Activated CD4-positive, alpha-beta memory T cell treated with anti-CD3 and anti-CD28 coated beads, Interleukin-2, amount 10 ng/mL, durations not matched to agents 7 days and 5 days (primary cell): ENCODE measurements at regions of chr14 and their contacts with region 1.

Region 1: DNA sequence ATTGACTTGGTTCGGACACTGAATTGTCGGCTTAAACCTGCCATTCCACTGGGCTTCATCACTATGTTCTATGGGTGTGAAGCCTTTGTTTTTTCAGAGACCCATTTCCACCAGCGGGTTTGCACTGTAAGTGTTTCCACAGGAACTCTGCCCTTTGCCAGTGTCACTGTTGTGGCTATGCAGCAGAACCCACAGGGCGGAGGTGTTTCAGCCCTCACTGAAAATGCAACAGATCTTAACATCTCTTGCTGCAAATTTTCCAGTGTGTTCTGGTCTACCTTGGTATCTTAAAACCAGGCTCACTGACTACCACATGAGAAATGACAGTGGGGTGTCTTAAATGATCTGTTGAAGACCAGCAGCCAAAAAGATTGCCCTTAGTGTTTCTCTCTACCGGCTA is 21.1 kb downstream of the PRKCH start:
- DNase-seq: peak; percentile 91
- H3K4me3 Mint-ChIP-seq: peak overlapping the region; percentile 62
- H3K27ac Mint-ChIP-seq: peak overlapping the region; percentile 95
- H3K4me1 Mint-ChIP-seq: peaks cover 94% of the 10 kb centered on the region
- H3K27me3 Mint-ChIP-seq: no peaks in the 10 kb centered on the region

Region 2: GRCh38 chr14:61125867-61126572 is 216.5 kb before region 1 on chr14:
- CTCF ChIA-PET with region 1: no interaction called
- POLR2A ChIA-PET with region 1: no interaction called
- DNase-seq: no peak
- H3K4me3 Mint-ChIP-seq: no peak overlapping the region
- H3K27ac Mint-ChIP-seq: no peak overlapping the region
- H3K4me1 Mint-ChIP-seq: peaks cover 26% of the 10 kb centered on the region
- H3K27me3 Mint-ChIP-seq: no peaks in the 10 kb centered on the region

Region 3: GRCh38 chr14:61269321-61270083 is 73.0 kb before region 1 on chr14:
- CTCF ChIA-PET with region 1: no interaction called
- POLR2A ChIA-PET with region 1: no interaction called
- DNase-seq: peak; percentile 82
- H3K4me3 Mint-ChIP-seq: no peak overlapping the region
- H3K27ac Mint-ChIP-seq: no peak overlapping the region
- H3K4me1 Mint-ChIP-seq: peaks cover 4% of the 10 kb centered on the region
- H3K27me3 Mint-ChIP-seq: peaks cover 59% of the 10 kb centered on the region

Region 4: DNA sequence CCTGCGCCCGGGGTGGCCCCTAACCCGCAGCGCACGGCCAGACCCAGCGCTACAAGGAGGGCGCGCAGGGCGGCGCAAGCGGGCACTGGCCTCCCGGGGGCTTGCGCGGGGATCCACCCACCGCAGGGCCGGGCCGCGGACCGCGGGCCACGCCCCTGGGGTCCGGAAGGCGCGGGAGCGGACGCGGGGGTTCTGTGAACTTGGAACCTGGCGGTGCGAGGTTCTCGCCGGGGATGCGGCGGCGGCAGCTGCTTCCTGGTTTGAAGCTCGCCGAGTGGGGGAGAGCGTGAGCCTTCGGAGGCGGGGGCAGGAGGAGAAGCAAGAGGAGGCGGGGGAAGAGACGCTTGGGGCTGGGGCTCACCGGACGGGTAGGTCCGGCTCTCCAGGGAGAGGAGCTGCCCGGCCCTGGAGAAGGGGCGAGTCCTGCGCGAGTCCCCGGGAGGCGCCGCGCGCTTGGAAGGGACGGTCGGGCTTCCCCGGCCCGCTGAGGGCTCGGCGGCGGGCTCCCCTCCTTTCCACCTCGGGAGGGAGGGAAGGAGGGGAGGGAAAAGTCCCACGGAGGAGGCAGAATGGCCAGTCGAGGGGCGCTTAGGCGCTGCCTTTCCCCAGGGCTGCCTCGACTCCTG is 21.0 kb before region 1 on chr14 and contains the start of gene PRKCH:
- CTCF ChIA-PET with region 1: interaction called, 54 read pairs
- POLR2A ChIA-PET with region 1: interaction called, 366 read pairs
- DNase-seq: peak; percentile 91
- H3K4me3 Mint-ChIP-seq: peak within 1 kb of the TSS; percentile 87
- H3K27ac Mint-ChIP-seq: peak within 1 kb of the TSS; percentile 86
- H3K4me1 Mint-ChIP-seq: peaks cover 24% of the 10 kb centered on the region
- H3K27me3 Mint-ChIP-seq: no peaks in the 10 kb centered on the region
- total RNA-seq, gene PRKCH: 186 to 195 TPM

Region 5: GRCh38 chr14:61326847-61327246 is 15.6 kb before region 1 on chr14:
- CTCF ChIA-PET with region 1: interaction called, 54 read pairs
- POLR2A ChIA-PET with region 1: interaction called, 366 read pairs
- DNase-seq: no peak
- H3K4me3 Mint-ChIP-seq: peak overlapping the region; percentile 87
- H3K27ac Mint-ChIP-seq: peak overlapping the region; percentile 92
- H3K4me1 Mint-ChIP-seq: peaks cover 63% of the 10 kb centered on the region
- H3K27me3 Mint-ChIP-seq: no peaks in the 10 kb centered on the region